PC-9 (cell line): ENCODE measurements at regions of chr11 and their contacts with region 1.

Region 1: GRCh38 chr11:101860696-101861427 is 53.9 kb upstream of the CEP126 start:
- DNase-seq: peak; percentile 30 to 68
- H3K4me3 ChIP-seq: no peak overlapping the region
- H3K27ac ChIP-seq: no peak overlapping the region
- H3K4me1 ChIP-seq: peaks cover 20% of the 10 kb centered on the region
- H3K27me3 ChIP-seq: no peaks in the 10 kb centered on the region
- CTCF ChIP-seq: peak; percentile 89

Region 2: DNA sequence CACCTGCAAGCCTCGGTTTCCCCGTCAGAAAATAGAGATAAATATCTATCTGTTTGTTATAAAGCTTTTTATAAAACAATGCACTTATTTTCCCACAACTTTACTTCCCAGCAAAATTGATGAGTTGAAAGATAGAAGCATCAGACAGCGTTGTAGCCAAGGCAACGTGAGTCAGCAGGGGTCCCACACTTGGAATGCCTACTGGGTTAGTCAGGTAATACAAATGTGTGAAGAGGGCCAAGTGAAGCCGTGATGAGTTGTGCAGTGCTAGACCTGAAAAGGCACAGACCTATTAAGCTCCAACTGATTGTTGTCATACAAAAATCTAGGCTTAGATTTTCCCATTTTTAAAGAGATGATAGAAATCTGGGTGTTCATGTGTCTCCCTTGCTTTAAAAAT is 850.0 kb before region 1 on chr11:
- CTCF ChIA-PET with region 1: no interaction called
- POLR2A ChIA-PET with region 1: interaction called, 10 read pairs
- intact Hi-C with region 1: no loop called
- DNase-seq: no peak
- H3K4me3 ChIP-seq: no peak overlapping the region
- H3K27ac ChIP-seq: no peak overlapping the region
- H3K4me1 ChIP-seq: no peaks in the 10 kb centered on the region
- H3K27me3 ChIP-seq: no peaks in the 10 kb centered on the region
- CTCF ChIP-seq: no peak

Region 3: DNA sequence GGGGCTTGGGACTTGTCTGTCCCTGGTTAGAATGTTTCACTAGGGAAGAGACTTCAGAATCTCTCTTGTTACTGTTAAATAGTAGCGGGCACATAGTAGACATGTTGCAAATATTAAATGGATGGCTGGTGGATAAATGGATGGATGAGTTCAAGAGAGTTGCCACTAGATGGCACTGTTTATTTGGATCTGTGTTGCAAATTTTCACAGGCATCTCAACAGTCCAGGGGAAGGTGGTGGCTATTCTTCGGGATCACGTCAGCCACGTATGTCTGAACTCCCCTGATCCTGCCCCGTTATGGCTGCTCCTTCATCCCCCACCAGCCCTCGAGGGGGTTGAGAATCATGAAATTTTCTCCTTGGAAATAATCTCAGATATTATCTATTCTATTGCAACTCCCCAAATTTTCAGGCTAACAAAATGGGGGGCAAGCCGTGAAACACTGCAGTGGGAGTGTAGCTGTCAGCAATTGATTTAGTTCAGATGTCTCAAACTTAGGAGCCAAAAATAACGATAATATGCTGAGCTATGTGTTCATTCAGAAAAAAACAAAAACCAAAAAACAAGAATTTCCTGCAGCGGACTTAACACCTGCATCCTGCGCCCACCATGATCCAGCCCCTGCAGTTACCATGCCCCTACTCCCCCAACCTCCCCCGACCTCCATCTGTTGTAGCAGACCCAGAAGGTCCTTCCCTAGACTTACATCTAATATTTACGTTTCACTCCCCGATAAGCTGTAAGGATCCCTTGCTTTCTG is 427.3 kb after region 1 on chr11:
- CTCF ChIA-PET with region 1: no interaction called
- POLR2A ChIA-PET with region 1: no interaction called
- intact Hi-C with region 1: loop called (anchors 5 kb)
- DNase-seq: peak; percentile 38 to 67
- H3K4me3 ChIP-seq: no peak overlapping the region
- H3K27ac ChIP-seq: no peak overlapping the region
- H3K4me1 ChIP-seq: peaks cover 24% of the 10 kb centered on the region
- H3K27me3 ChIP-seq: no peaks in the 10 kb centered on the region
- CTCF ChIP-seq: peak; percentile 92